AG04449 (cell line): ENCODE measurements at regions of chr2 and their contacts with region 1.

Region 1: DNA sequence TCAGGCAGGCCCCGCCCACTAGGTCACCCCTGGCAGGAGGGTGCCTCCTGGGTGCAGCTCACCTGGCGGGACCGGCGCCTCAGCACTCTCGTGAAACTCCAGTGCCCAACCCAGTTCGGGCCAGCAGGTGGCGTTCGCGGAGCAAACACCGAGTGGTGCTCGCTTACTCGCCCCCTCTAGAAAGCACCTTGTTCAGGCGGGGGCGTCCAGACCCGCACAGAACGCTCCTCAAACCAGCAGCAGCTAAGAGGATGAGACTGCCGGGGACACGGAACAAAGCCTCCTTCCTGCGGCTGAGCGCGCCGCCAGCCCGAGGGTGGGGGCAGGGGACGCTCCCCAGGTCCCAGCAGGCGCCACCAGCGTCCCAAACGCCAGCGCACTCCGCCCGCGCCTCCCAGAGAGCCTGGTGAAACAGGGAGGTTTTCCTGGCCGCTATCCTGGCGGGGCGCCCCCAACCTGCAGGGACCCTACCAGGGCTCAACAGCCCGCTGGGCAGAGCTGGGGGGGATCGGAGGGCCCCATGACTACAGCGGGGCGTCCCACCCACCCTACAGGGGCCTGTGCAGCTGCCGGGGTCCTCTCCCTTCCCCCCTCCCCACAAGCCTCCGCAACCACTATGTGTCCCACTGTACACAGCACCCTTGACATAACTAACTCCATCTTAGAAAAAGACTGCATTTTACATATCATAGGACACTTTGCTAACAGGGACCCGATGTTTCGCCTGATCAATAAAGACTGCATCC is 44.7 kb downstream of the MRPS5 start:
- DNase-seq: no peak
- H3K4me3 ChIP-seq: peak overlapping the region; percentile 56
- CTCF ChIP-seq: peak; percentile 86

Region 2: GRCh38 chr2:95022309-95023221 is 54.4 kb before region 1 on chr2:
- CTCF ChIA-PET with region 1: interaction called, 18 read pairs
- POLR2A ChIA-PET with region 1: no interaction called
- DNase-seq: no peak
- H3K4me3 ChIP-seq: no peak overlapping the region
- CTCF ChIP-seq: peak; percentile 89

Region 3: DNA sequence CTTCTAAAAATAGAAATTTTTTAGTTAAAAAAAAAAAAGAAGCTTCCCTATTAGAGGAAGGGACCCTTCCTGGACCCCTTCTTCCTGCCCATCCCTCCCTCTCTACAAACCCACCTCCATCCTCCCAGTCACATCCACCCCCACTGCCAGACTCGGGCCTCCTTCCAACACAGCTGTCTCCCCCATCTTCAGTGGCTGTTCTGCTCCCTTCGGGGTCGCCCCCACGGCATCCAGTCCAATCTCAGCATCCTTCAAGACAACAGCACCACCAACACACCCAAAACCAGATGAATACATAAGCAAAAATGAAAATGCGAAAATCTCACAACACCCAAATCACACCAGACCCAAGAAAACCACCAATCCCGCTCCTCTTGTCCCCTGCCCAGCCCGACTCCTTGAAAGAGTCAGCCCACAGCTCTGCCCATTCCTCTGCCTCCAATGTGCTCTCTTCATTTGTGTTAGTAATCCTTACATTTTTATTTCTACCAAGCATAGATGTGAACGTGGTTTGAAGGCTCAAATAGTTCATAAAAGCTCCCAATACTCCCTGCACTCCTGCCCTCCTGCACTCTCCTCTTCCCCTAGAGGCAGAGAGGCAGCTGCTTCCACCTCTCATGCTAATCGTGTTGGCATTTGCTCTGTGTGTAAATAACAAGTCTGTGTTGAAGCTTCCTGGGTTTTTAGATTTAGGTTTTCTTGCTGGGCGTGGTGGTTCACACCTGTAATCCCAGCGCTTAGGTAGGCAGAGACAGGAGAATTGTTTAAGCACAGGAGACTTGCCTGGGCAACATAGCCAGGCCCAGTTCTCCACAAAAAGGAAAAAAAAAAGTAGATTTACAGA is 14.5 kb before region 1 on chr2:
- CTCF ChIA-PET with region 1: interaction called, 22 read pairs
- POLR2A ChIA-PET with region 1: no interaction called
- DNase-seq: no peak
- H3K4me3 ChIP-seq: no peak overlapping the region
- CTCF ChIP-seq: no peak

Region 4: GRCh38 chr2:95091885-95092555 is 15.1 kb after region 1 on chr2:
- CTCF ChIA-PET with region 1: interaction called, 58 read pairs
- POLR2A ChIA-PET with region 1: no interaction called
- DNase-seq: no peak
- H3K4me3 ChIP-seq: no peak overlapping the region
- CTCF ChIP-seq: no peak

Region 5: GRCh38 chr2:95106081-95106480 is 29.1 kb after region 1 on chr2:
- CTCF ChIA-PET with region 1: interaction called, 14 read pairs
- POLR2A ChIA-PET with region 1: no interaction called
- DNase-seq: no peak
- H3K4me3 ChIP-seq: no peak overlapping the region
- CTCF ChIP-seq: no peak